ENCODE measurements at regions of chr10 and their contacts with region 1.

Region 1: DNA sequence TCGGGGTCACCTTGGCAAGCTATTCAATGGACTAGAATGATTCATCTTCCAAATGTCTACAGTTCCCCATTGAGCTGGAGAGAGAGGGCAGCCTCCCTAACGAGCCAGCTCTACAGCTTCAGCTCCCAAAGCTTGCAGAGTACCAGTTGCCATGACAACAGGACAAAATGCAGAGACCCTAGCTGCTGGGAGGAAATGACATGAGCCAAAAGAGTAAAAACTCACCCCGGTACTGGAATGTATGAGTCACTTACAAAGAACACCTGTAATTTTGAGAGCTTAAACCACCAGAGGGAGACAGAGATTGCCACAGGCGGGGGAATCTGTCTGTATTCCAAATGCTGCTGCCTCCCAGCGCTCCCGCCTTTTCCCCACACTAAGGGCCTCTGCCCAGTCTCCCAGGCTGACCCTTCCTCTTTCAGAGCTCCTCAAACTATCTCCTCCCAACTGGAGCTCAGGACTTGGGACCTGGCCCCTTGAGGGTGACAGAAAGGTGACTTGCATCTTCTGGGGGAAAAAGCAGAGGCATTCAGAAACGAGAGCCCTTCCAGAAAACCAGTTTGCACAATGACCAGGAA is 95.5 kb downstream of the CUL2 start:
- DNase-seq: peak; percentile 87
- H3K4me3 ChIP-seq: no peak overlapping the region
- H3K27ac ChIP-seq: no peak overlapping the region
- H3K4me1 ChIP-seq: peaks cover 7% of the 10 kb centered on the region
- H3K27me3 ChIP-seq: no peaks in the 10 kb centered on the region
- CTCF ChIP-seq: peak; percentile 67
- POLR2A ChIP-seq: no peak

Region 2: DNA sequence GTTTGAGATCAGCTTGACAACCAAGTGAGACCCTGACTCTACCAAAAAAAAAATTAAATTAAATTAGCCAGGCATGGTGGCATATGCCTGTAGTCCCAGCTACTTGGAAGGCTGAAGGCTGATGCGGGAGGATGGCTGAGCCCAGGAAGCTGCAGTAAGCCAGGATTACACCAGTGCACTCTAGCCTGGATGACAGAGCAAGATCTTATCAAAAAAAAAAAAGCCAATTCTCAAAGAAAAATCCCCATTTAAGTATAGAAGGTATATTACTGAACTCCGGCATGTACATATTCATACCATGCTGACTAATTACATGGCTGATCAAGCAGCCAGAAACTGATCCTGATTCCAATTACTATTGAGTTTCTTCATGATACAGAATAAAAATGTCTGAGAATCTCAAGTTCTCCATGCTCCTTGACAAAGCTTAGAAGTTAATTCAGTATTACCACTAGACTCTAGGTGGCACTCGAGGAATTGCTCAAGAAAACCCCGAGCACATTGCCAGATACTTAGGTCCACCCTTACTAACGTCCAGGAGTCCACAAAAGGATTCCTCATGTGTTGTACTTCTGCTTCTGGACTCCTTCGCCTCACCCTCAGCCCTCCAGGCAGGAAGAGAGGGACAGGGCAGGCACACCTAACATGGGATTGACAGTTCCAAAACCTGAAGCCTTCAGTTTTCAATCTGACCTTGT is 328.5 kb before region 1 on chr10:
- CTCF ChIA-PET with region 1: interaction called, 22 read pairs
- POLR2A ChIA-PET with region 1: no interaction called
- dilution Hi-C with region 1: no loop called
- intact Hi-C with region 1: loop called (anchors 5 kb)
- DNase-seq: peak; percentile 83
- H3K4me3 ChIP-seq: no peak overlapping the region
- H3K27ac ChIP-seq: no peak overlapping the region
- H3K4me1 ChIP-seq: no peaks in the 10 kb centered on the region
- H3K27me3 ChIP-seq: no peaks in the 10 kb centered on the region
- CTCF ChIP-seq: peak; percentile 45 to 46
- POLR2A ChIP-seq: no peak

Region 3: GRCh38 chr10:35005868-35006267 is 11.2 kb after region 1 on chr10:
- CTCF ChIA-PET with region 1: interaction called, 15 read pairs
- POLR2A ChIA-PET with region 1: interaction called, 3 read pairs
- dilution Hi-C with region 1: no loop called
- intact Hi-C with region 1: no loop called
- DNase-seq: peak; percentile 16
- H3K4me3 ChIP-seq: no peak overlapping the region
- H3K27ac ChIP-seq: peak overlapping the region; percentile 49
- H3K4me1 ChIP-seq: peaks cover 3% of the 10 kb centered on the region
- H3K27me3 ChIP-seq: no peaks in the 10 kb centered on the region
- CTCF ChIP-seq: no peak
- POLR2A ChIP-seq: no peak

Region 4: DNA sequence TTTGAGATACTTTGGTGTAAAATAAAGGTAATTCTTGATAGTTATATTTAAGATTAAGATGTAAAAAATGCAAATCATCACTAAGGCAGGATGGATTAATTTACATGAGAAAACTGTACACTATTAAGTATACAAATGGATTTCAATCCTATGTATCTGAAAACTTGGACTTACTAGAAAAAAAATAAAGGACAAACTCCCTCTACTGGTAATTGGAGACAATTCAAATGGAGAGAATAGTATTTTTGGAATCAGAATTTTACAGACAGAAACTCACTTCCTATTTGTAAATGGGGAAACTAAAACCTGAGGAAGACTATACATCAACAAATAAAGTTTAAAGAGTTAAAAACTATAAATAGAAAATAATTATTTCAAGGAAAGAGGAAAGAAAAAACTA is 32.9 kb after region 1 on chr10:
- CTCF ChIA-PET with region 1: interaction called, 90 read pairs
- POLR2A ChIA-PET with region 1: no interaction called
- dilution Hi-C with region 1: no loop called
- intact Hi-C with region 1: loop called (anchors 1 kb)
- DNase-seq: peak; percentile 63
- H3K4me3 ChIP-seq: no peak overlapping the region
- H3K27ac ChIP-seq: no peak overlapping the region
- H3K4me1 ChIP-seq: no peaks in the 10 kb centered on the region
- H3K27me3 ChIP-seq: no peaks in the 10 kb centered on the region
- CTCF ChIP-seq: peak in 1 of 2 donors; percentile 6
- POLR2A ChIP-seq: no peak

Region 5: GRCh38 chr10:35119378-35119777 is 124.7 kb after region 1 on chr10:
- CTCF ChIA-PET with region 1: interaction called, 10 read pairs
- POLR2A ChIA-PET with region 1: no interaction called
- dilution Hi-C with region 1: no loop called
- intact Hi-C with region 1: no loop called
- DNase-seq: no peak
- H3K4me3 ChIP-seq: no peak overlapping the region
- H3K27ac ChIP-seq: no peak overlapping the region
- H3K4me1 ChIP-seq: no peaks in the 10 kb centered on the region
- H3K27me3 ChIP-seq: peaks cover 0 to 2% of the 10 kb centered on the region in 2 experiments
- CTCF ChIP-seq: no peak
- POLR2A ChIP-seq: no peak

Region 6: GRCh38 chr10:35218339-35218955 is 223.8 kb after region 1 on chr10:
- CTCF ChIA-PET with region 1: interaction called, 21 read pairs
- POLR2A ChIA-PET with region 1: no interaction called
- dilution Hi-C with region 1: no loop called
- intact Hi-C with region 1: loop called (anchors 1 kb)
- DNase-seq: peak; percentile 86
- H3K4me3 ChIP-seq: no peak overlapping the region
- H3K27ac ChIP-seq: no peak overlapping the region
- H3K4me1 ChIP-seq: peaks cover 3% of the 10 kb centered on the region
- H3K27me3 ChIP-seq: no peaks in the 10 kb centered on the region
- CTCF ChIP-seq: peak; percentile 62 to 80
- POLR2A ChIP-seq: no peak

Measured in endothelial cell of umbilical vein (primary cell).